ENCODE measurements at regions of chr1 and their contacts with region 1.

Region 1: GRCh38 chr1:27044613-27045151 is 32.0 kb upstream of the TENT5B start:
- DNase-seq: peak; percentile 76 to 87 (median 80)
- H3K4me3 ChIP-seq: peak overlapping the region in 1 of 3 experiments; percentile 62
- H3K4me3 Mint-ChIP-seq: peak overlapping the region; percentile 34 to 72
- H3K27ac ChIP-seq: no peak overlapping the region
- H3K27ac Mint-ChIP-seq: peak overlapping the region in 1 of 7 donors; percentile 24
- H3K4me1 ChIP-seq: peaks cover 8 to 9% of the 10 kb centered on the region in 2 donors
- H3K4me1 Mint-ChIP-seq: peaks cover 19% of the 10 kb centered on the region
- H3K27me3 ChIP-seq: peaks cover 0 to 5% of the 10 kb centered on the region in 2 donors
- H3K27me3 Mint-ChIP-seq: peaks cover 6 to 11% (median 7%) of the 10 kb centered on the region in 3 donors
- CTCF ChIP-seq: peak; percentile 95

Region 2: DNA sequence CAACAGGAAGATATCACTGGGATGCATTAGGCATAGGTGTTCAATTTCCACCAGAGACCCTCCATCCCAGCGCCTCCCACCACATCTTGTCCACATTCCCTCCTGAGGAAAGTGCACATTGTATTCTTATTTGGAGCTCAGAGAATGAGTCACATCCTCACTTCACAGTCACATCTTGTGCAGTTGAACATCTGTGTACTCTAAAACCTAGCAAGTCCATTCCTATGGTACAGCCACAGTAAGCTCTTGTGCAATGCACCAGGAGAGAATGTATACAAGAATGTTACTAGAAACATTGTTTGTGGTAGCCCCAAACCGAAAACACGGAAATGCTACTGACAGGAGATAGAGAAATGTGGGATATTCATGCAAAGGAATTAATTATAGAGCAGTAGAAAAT is 82.9 kb before region 1 on chr1:
- intact Hi-C with region 1: loop called in 1 of 2 experiments (anchors 1 kb)
- DNase-seq: no peak
- H3K4me3 ChIP-seq: no peak overlapping the region
- H3K4me3 Mint-ChIP-seq: peak overlapping the region in 1 of 2 donors; percentile 22
- H3K27ac ChIP-seq: no peak overlapping the region
- H3K27ac Mint-ChIP-seq: no peak overlapping the region
- H3K4me1 ChIP-seq: peaks cover 7 to 14% of the 10 kb centered on the region in 2 donors
- H3K4me1 Mint-ChIP-seq: peaks cover 18% of the 10 kb centered on the region
- H3K27me3 ChIP-seq: peaks cover 33 to 42% of the 10 kb centered on the region in 2 donors
- H3K27me3 Mint-ChIP-seq: peaks cover 46 to 61% (median 51%) of the 10 kb centered on the region in 3 donors
- CTCF ChIP-seq: no peak

Region 3: DNA sequence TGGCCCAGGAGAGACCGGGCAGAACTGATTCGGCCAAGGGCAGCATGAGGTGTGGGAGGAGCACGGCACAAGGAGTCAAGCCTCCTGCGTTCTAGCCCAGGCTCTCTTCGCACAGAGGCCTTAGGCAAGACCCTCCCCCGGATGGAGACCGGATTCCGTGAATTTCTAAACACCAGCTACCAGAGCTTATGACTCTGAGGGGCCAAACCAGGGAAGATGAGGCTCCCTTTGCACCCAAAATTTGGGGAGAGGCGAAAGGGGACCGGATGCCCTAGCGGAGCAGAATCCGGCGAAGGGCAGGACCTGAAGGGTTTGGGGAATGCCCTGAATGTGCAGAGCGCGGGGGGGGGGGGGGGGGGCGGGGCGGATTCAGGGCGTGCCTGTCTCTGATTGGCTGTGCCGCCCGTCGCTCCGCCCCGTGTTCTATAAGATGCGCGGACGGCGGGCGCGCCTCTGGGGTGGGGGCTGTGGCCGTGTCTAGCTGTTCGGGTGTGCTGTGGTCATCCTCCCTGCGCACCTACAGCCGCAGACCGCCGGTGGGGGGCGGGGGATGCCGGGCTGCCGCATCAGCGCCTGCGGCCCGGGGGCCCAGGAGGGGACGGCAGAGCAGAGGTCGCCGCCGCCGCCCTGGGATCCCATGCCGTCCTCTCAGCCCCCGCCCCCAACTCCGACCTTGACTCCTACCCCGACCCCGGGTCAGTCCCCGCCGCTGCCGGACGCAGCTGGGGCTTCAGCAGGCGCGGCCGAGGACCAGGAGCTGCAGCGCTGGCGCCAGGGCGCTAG is 51.3 kb before region 1 on chr1 and contains the start of gene TRNP1:
- intact Hi-C with region 1: no loop called
- DNase-seq: peak; percentile 55 to 73 (median 70)
- H3K4me3 ChIP-seq: peak within 1 kb of the TSS; percentile 19 to 74 (median 43)
- H3K4me3 Mint-ChIP-seq: peak within 1 kb of the TSS; percentile 83 to 91
- H3K27ac ChIP-seq: no peak within 1 kb of the TSS
- H3K27ac Mint-ChIP-seq: peak within 1 kb of the TSS in 5 of 7 donors; percentile 53 to 80 (median 76)
- H3K4me1 ChIP-seq: peaks cover 40 to 54% of the 10 kb centered on the region in 2 donors
- H3K4me1 Mint-ChIP-seq: peaks cover 50% of the 10 kb centered on the region
- H3K27me3 ChIP-seq: peaks cover 28 to 56% of the 10 kb centered on the region in 2 donors
- H3K27me3 Mint-ChIP-seq: peaks cover 63 to 78% (median 68%) of the 10 kb centered on the region in 3 donors
- CTCF ChIP-seq: no peak
- polyA plus RNA-seq, gene TRNP1: 0.55 to 2.8 (median 0.92) TPM

Region 4: GRCh38 chr1:27097484-27097917 is 52.8 kb after region 1 on chr1:
- intact Hi-C with region 1: loop called (anchors 1 kb)
- DNase-seq: peak; percentile 90 to 92 (median 92)
- H3K4me3 ChIP-seq: no peak overlapping the region
- H3K4me3 Mint-ChIP-seq: peak overlapping the region in 1 of 2 donors; percentile 35
- H3K27ac ChIP-seq: peak overlapping the region; percentile 85 to 88
- H3K27ac Mint-ChIP-seq: peak overlapping the region; percentile 74 to 98 (median 97)
- H3K4me1 ChIP-seq: peaks cover 36 to 48% of the 10 kb centered on the region in 2 donors
- H3K4me1 Mint-ChIP-seq: peaks cover 48% of the 10 kb centered on the region
- H3K27me3 ChIP-seq: no peaks in the 10 kb centered on the region
- H3K27me3 Mint-ChIP-seq: peaks cover 0 to 7% (median 1%) of the 10 kb centered on the region in 3 donors
- CTCF ChIP-seq: peak; percentile 98

Region 5: GRCh38 chr1:27192039-27192529 is 147.4 kb after region 1 on chr1:
- intact Hi-C with region 1: loop called in 1 of 2 experiments (anchors 10 kb)
- DNase-seq: peak; percentile 66 to 76 (median 66)
- H3K4me3 ChIP-seq: no peak overlapping the region
- H3K4me3 Mint-ChIP-seq: peak overlapping the region; percentile 9 to 68
- H3K27ac ChIP-seq: no peak overlapping the region
- H3K27ac Mint-ChIP-seq: peak overlapping the region in 5 of 7 donors; percentile 75 to 90 (median 89)
- H3K4me1 ChIP-seq: peaks cover 14 to 18% of the 10 kb centered on the region in 2 donors
- H3K4me1 Mint-ChIP-seq: peaks cover 14% of the 10 kb centered on the region
- H3K27me3 ChIP-seq: no peaks in the 10 kb centered on the region
- H3K27me3 Mint-ChIP-seq: peaks cover 2 to 6% (median 2%) of the 10 kb centered on the region in 3 donors
- CTCF ChIP-seq: no peak

Region 6: DNA sequence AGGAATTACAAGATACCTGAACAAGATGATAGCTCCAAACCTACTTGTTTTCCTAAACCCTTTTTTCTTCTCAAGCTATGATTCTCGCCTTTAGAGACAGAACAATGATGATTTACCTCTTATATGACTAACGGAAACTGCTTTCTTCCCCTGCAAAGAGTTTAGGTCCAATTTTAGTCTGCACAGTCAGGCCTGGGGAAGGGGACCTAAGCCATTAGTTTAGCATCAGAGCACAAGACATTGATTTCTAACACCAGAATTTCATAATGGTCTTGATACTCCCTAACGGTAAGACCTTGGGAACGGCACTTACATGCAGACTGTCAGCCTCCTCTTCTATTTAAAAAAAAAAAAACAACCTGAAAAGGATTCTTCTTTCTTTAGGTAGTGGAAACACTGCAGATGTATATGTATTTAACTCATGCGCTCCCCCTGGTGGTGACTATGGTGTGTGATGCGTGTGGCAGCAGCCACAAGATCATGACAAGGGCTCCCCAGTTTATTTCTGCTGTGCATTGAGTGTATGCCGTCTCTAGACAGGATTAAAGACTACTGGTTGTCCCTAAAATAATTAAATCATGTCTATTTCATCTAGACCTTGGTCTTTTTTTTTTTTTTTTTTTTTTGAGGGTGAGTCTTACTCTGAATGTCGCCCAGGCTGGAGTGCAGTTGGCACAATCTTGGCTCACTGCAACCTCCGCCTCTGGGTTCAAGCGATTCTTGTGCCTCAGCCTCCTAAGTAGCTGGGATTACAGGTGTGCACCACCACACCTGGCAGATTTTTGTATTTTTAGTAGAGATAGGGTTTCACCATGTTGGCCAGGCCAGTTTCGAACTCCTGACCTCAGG is 240.0 kb after region 1 on chr1:
- intact Hi-C with region 1: loop called in 1 of 2 experiments (anchors 2 kb)
- DNase-seq: peak; percentile 74 to 80 (median 78)
- H3K4me3 ChIP-seq: no peak overlapping the region
- H3K4me3 Mint-ChIP-seq: no peak overlapping the region
- H3K27ac ChIP-seq: no peak overlapping the region
- H3K27ac Mint-ChIP-seq: peak overlapping the region in 1 of 7 donors; percentile 15
- H3K4me1 ChIP-seq: no peaks in the 10 kb centered on the region
- H3K4me1 Mint-ChIP-seq: no peaks in the 10 kb centered on the region
- H3K27me3 ChIP-seq: no peaks in the 10 kb centered on the region
- H3K27me3 Mint-ChIP-seq: peaks cover 0 to 3% (median 0%) of the 10 kb centered on the region in 3 donors
- CTCF ChIP-seq: peak; percentile 84

Region 7: DNA sequence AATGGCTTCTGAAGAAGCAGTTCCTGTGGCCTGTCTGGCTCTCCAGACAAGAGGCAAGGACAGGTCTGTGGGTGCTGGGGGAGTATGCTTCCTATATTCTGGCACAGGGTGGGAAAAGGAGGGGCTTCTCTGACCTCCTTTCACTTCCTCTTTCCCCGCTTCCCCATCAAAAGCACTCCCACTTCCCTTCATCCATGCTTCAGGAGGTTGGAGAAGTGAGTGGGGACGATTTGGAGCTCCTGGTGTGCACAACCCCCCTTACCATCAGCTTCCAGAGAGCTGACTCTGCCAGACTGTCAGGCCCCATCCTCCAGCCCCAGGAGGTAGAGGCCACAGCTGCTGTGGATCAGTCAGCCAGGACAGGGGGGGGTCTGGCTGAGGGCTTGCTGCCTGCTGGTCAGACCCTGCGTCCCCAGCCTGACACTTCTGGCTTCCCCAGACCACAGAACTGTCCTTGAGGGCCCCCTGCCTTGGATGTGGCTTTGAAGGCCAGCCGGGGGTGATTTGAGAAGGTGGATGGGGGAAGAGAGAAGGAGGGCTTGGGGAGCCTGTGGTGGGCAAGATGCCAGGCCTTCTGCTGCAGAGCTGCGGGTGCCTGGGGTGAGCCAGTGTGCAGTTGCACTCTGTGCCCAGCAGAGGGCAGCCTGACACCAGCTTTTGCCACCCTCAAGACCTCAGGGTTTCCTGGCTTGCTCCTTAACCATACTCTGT is 255.8 kb after region 1 on chr1:
- intact Hi-C with region 1: loop called in 1 of 2 experiments (anchors 10 kb)
- DNase-seq: peak; percentile 76 to 83 (median 81)
- H3K4me3 ChIP-seq: peak overlapping the region in 1 of 3 experiments; percentile 27
- H3K4me3 Mint-ChIP-seq: no peak overlapping the region
- H3K27ac ChIP-seq: peak overlapping the region; percentile 75 to 84
- H3K27ac Mint-ChIP-seq: peak overlapping the region; percentile 72 to 92 (median 89)
- H3K4me1 ChIP-seq: peaks cover 25 to 26% of the 10 kb centered on the region in 2 donors
- H3K4me1 Mint-ChIP-seq: peaks cover 23% of the 10 kb centered on the region
- H3K27me3 ChIP-seq: no peaks in the 10 kb centered on the region
- H3K27me3 Mint-ChIP-seq: no peaks in the 10 kb centered on the region
- CTCF ChIP-seq: peak; percentile 98

Measured in CD14-positive monocyte (primary cell).